Heart left ventricle (tissue), 16 donors: ENCODE measurements at regions of chr9 and their contacts with region 1.

Region 1: GRCh38 chr9:13878241-13878711 is 435.7 kb downstream of the NFIB start:
- DNase-seq: no peak
- ATAC-seq: no peak
- H3K4me3 ChIP-seq: no peak overlapping the region
- H3K27ac ChIP-seq: no peak overlapping the region
- H3K4me1 ChIP-seq: peaks cover 0 to 8% (median 0%) of the 10 kb centered on the region in 12 donors
- H3K27me3 ChIP-seq: no peaks in the 10 kb centered on the region
- CTCF ChIP-seq: no peak
- POLR2A ChIP-seq: no peak

Region 2: DNA sequence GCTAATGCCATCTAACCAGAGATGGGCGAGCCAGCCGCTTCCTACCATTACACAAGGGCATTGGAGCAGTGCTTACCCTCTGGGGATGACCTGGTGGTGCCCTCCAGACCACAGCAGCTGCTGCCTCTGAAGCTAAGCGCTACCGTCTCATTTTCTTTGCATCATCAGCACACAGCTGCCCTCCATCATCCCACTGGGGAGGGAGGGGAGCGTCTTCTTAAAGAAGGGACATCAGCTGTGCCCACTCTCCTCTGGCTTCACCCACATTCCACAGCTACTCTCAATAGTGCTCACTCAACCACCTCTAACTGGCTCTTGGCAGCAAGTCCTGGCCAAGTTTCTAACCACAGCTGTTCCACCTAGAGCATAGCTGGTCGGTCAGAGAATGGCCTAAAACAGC is 67.8 kb before region 1 on chr9:
- intact Hi-C with region 1: loop called in 1 of 10 experiments (anchors 10 kb)
- DNase-seq: no peak
- ATAC-seq: no peak
- H3K4me3 ChIP-seq: no peak overlapping the region
- H3K27ac ChIP-seq: no peak overlapping the region
- H3K4me1 ChIP-seq: peaks cover 0 to 4% (median 0%) of the 10 kb centered on the region in 12 donors
- H3K27me3 ChIP-seq: no peaks in the 10 kb centered on the region
- CTCF ChIP-seq: no peak
- POLR2A ChIP-seq: no peak

Region 3: GRCh38 chr9:13956107-13956506 is 77.8 kb after region 1 on chr9:
- intact Hi-C with region 1: loop called in 1 of 10 experiments (anchors 10 kb)
- DNase-seq: no peak
- ATAC-seq: no peak
- H3K4me3 ChIP-seq: no peak overlapping the region
- H3K27ac ChIP-seq: no peak overlapping the region
- H3K4me1 ChIP-seq: peaks cover 0 to 21% (median 2%) of the 10 kb centered on the region in 12 donors
- H3K27me3 ChIP-seq: no peaks in the 10 kb centered on the region
- CTCF ChIP-seq: no peak
- POLR2A ChIP-seq: no peak